AG04449 (cell line): ENCODE measurements at regions of chr14 and their contacts with region 1.

Region 1: GRCh38 chr14:20613094-20614037 is 22.2 kb upstream of the RNASE12 start:
- DNase-seq: peak; percentile 98
- H3K4me3 ChIP-seq: peak overlapping the region; percentile 70
- CTCF ChIP-seq: peak; percentile 68

Region 2: GRCh38 chr14:20327005-20327869 is 286.1 kb before region 1 on chr14:
- CTCF ChIA-PET with region 1: interaction called, 161 read pairs
- POLR2A ChIA-PET with region 1: no interaction called
- DNase-seq: no peak
- H3K4me3 ChIP-seq: no peak overlapping the region
- CTCF ChIP-seq: peak; percentile 40

Region 3: GRCh38 chr14:20343092-20343861 is 270.1 kb before region 1 on chr14 and contains the start of gene PARP2:
- CTCF ChIA-PET with region 1: interaction called, 5 read pairs
- POLR2A ChIA-PET with region 1: interaction called, 10 read pairs
- DNase-seq: peak; percentile 98
- H3K4me3 ChIP-seq: peak within 1 kb of the TSS; percentile 88
- CTCF ChIP-seq: no peak

Region 4: DNA sequence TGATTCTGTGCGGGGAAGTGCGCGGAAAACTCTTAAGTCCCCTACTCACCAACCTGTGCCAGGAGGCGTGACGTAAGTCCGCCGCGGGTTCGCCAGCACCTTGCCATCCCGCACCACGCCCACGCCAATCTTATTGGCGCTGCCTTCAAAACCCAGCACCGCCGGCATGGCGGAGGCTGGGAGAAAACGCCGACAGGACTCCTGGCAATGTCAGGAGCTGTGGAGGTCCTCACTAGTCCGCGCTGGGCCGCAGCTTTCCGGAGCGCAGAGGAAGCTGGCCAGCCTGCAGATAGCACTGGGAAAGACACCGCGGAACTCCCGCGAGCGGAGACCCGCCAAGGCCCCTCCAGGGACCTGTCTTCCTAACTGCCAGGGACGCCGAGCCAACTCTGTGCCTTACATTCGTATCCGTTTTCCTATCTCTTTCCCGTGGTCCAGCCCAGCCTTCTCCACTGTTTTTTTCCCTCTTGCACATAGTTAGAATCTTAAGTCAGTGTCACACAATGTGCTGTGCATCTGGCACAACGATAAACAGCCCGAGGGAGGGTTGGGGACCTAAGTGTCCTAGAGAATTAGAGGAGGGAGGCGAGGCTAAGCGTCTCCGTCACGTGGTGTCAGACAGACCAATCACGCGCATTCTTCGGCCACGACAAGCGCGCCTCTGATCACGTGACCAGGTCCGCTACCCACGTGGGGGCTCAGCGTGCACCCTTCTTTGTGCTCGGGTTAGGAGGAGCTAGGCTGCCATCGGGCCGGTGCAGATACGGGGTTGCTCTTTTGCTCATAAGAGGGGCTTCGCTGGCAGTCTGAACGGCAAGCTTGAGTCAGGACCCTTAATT is 158.6 kb before region 1 on chr14 and contains the starts of genes APEX1 and OSGEP:
- CTCF ChIA-PET with region 1: interaction called, 25 read pairs
- POLR2A ChIA-PET with region 1: no interaction called
- DNase-seq: peak; percentile 90
- H3K4me3 ChIP-seq: peak within 1 kb of the TSS; percentile 96
- CTCF ChIP-seq: no peak

Region 5: DNA sequence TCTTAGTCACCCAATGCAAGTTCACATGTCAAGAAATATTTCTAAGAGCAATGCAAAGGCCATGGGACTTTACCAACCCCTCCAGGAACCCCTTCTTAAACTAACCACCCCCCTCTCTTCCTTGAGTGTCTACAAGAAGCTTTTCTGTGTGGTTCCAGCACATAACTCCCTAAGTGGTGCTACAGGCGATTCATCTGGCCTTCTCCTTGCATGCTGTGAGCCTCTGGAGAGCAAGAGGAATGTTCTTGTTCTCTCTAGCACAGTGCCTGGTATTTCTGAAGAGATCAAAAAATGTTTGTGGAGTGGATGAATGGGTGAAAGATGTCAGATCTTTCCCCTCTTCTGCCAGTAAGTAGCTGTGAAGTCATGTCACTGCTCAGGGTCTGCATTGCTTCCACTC is 16.3 kb before region 1 on chr14:
- CTCF ChIA-PET with region 1: interaction called, 18 read pairs
- POLR2A ChIA-PET with region 1: no interaction called
- DNase-seq: no peak
- H3K4me3 ChIP-seq: no peak overlapping the region
- CTCF ChIP-seq: no peak

Region 6: GRCh38 chr14:20632682-20633428 is 19.5 kb after region 1 on chr14:
- CTCF ChIA-PET with region 1: interaction called, 15 read pairs
- POLR2A ChIA-PET with region 1: interaction called, 3 read pairs
- DNase-seq: peak; percentile 53
- H3K4me3 ChIP-seq: peak overlapping the region; percentile 57
- CTCF ChIP-seq: no peak

Region 7: GRCh38 chr14:20690848-20691523 is 77.6 kb after region 1 on chr14:
- CTCF ChIA-PET with region 1: interaction called, 50 read pairs
- POLR2A ChIA-PET with region 1: interaction called, 3 read pairs
- DNase-seq: no peak
- H3K4me3 ChIP-seq: no peak overlapping the region
- CTCF ChIP-seq: peak; percentile 76

Region 8: DNA sequence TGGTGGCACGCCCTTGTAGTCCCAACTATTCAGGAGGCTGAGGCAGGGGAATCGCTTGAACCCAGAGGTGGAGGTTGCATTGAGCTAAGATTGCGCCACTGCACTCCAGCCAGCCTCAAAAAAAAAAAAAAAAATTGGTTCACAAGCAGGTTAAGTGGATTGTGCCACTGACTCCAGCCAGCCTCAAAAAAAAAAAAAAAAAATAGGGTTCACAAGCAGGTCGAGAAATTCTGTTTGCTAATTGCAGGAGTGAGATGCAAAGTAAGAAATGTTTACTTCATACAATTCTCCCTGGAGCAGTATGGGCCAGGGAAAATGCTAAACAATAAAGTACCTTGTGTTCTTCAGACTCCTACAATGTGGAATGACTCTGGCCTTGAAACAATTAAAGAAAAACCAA is 161.0 kb after region 1 on chr14:
- CTCF ChIA-PET with region 1: no interaction called
- POLR2A ChIA-PET with region 1: no interaction called
- DNase-seq: no peak
- H3K4me3 ChIP-seq: no peak overlapping the region
- CTCF ChIP-seq: no peak